ENCODE measurements at regions of chr1 and their contacts with region 1.

Region 1: GRCh38 chr1:9004700-9005394 is 21.4 kb downstream of the SLC2A7 start:
- DNase-seq: peak; percentile 76
- H3K4me3 ChIP-seq: no peak overlapping the region
- H3K27ac ChIP-seq: no peak overlapping the region
- H3K27me3 ChIP-seq: peaks cover 2% of the 10 kb centered on the region
- CTCF ChIP-seq: peak; percentile 97

Region 2: GRCh38 chr1:8866792-8867415 is 137.9 kb before region 1 on chr1:
- CTCF ChIA-PET with region 1: interaction called, 24 read pairs
- POLR2A ChIA-PET with region 1: no interaction called
- DNase-seq: no peak
- H3K4me3 ChIP-seq: no peak overlapping the region
- H3K27ac ChIP-seq: no peak overlapping the region
- H3K27me3 ChIP-seq: no peaks in the 10 kb centered on the region
- CTCF ChIP-seq: no peak

Region 3: GRCh38 chr1:8911416-8911815 is 93.4 kb before region 1 on chr1:
- CTCF ChIA-PET with region 1: interaction called, 162 read pairs
- POLR2A ChIA-PET with region 1: no interaction called
- DNase-seq: no peak
- H3K4me3 ChIP-seq: no peak overlapping the region
- H3K27ac ChIP-seq: peak overlapping the region; percentile 11
- H3K27me3 ChIP-seq: no peaks in the 10 kb centered on the region
- CTCF ChIP-seq: no peak

Region 4: GRCh38 chr1:8941906-8942305 is 62.9 kb before region 1 on chr1:
- CTCF ChIA-PET with region 1: interaction called, 32 read pairs
- POLR2A ChIA-PET with region 1: no interaction called
- DNase-seq: peak; percentile 61
- H3K4me3 ChIP-seq: no peak overlapping the region
- H3K27ac ChIP-seq: no peak overlapping the region
- H3K27me3 ChIP-seq: no peaks in the 10 kb centered on the region
- CTCF ChIP-seq: no peak

Region 5: GRCh38 chr1:8970870-8971337 is 33.9 kb before region 1 on chr1:
- CTCF ChIA-PET with region 1: interaction called, 10 read pairs
- POLR2A ChIA-PET with region 1: no interaction called
- DNase-seq: no peak
- H3K4me3 ChIP-seq: no peak overlapping the region
- H3K27ac ChIP-seq: no peak overlapping the region
- H3K27me3 ChIP-seq: peaks cover 3% of the 10 kb centered on the region
- CTCF ChIP-seq: no peak

Region 6: GRCh38 chr1:8992936-8993687 is 11.7 kb before region 1 on chr1:
- CTCF ChIA-PET with region 1: interaction called, 10 read pairs
- POLR2A ChIA-PET with region 1: interaction called, 3 read pairs
- DNase-seq: no peak
- H3K4me3 ChIP-seq: no peak overlapping the region
- H3K27ac ChIP-seq: no peak overlapping the region
- H3K27me3 ChIP-seq: peaks cover 2% of the 10 kb centered on the region
- CTCF ChIP-seq: peak; percentile 26

Region 7: GRCh38 chr1:9086796-9087195 is 81.9 kb after region 1 on chr1:
- CTCF ChIA-PET with region 1: no interaction called
- POLR2A ChIA-PET with region 1: no interaction called
- DNase-seq: no peak
- H3K4me3 ChIP-seq: no peak overlapping the region
- H3K27ac ChIP-seq: no peak overlapping the region
- H3K27me3 ChIP-seq: peaks cover 27% of the 10 kb centered on the region
- CTCF ChIP-seq: no peak

Region 8: GRCh38 chr1:9101510-9102146 is 96.8 kb after region 1 on chr1:
- CTCF ChIA-PET with region 1: interaction called, 54 read pairs
- POLR2A ChIA-PET with region 1: no interaction called
- DNase-seq: peak; percentile 38
- H3K4me3 ChIP-seq: no peak overlapping the region
- H3K27ac ChIP-seq: no peak overlapping the region
- H3K27me3 ChIP-seq: no peaks in the 10 kb centered on the region
- CTCF ChIP-seq: peak; percentile 86